Calu3 (cell line): ENCODE measurements at regions of chr1 and their contacts with region 1.

Region 1: DNA sequence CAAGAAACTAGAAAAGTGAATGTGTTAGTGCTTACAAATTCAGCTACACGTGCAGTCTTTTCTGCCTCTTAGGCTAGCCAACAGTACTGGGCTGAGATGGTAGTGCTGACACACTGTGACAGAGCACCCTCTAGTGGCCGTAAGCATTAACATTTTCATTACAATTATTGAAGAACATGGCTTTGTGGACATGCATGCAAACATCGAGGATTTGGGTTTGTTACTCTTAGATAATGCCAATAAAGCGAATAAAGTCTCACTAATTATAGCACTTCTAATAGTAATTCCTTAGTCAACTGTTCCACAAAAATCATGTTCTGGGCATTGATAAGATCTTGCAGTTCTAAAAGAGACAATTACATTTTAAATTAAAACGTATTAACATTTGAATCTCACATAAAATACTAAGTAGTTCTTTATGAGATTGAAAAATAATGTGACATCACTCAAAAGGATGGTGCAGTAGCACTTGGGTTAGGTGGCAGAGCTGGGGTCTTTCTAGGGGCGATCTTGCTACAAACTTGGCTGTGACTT is 47.1 kb downstream of the MYSM1 start:
- DNase-seq: peak; percentile 67
- H3K4me3 Mint-ChIP-seq: no peak overlapping the region
- H3K27ac Mint-ChIP-seq: no peak overlapping the region
- H3K4me1 Mint-ChIP-seq: peaks cover 34% of the 10 kb centered on the region
- H3K27me3 Mint-ChIP-seq: no peaks in the 10 kb centered on the region
- CTCF ChIP-seq: peak; percentile 72

Region 2: DNA sequence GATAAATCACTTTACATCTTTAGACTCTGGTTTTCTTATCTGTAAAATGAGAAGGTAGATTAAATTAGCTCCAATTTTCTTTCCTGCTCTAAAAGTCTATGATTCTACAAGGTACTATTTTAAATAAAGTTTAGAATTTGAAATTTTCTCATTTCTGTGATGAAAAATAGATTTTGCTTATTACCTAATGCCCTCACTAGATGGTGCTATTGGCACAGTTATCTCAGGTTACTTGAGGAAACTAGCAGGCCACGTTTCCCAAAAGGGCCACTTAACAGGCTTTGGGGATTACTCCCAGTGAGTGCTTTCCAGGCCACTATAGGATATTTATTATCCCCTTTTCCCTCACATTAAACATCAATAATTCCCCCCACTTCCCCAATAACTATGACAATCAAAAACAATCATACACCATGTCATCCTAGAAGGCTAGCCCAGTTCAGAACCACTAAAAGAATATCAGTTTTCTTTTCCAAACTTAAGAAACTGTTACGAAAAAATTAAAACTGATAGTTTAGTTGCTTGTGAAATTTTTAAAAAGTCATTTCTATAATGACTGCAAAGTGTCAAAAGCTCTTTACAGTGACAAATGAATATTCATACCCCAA is 136.8 kb before region 1 on chr1:
- CTCF ChIA-PET with region 1: interaction called, 3 read pairs
- intact Hi-C with region 1: loop called (anchors 1 kb)
- DNase-seq: peak; percentile 39
- H3K4me3 Mint-ChIP-seq: no peak overlapping the region
- H3K27ac Mint-ChIP-seq: no peak overlapping the region
- H3K4me1 Mint-ChIP-seq: no peaks in the 10 kb centered on the region
- H3K27me3 Mint-ChIP-seq: no peaks in the 10 kb centered on the region
- CTCF ChIP-seq: peak; percentile 54

Region 3: GRCh38 chr1:58546520-58547308 is 106.0 kb before region 1 on chr1 and contains the start of gene OMA1:
- CTCF ChIA-PET with region 1: interaction called, 19 read pairs
- intact Hi-C with region 1: loop called (anchors 10 kb)
- DNase-seq: peak; percentile 97
- H3K4me3 Mint-ChIP-seq: peak within 1 kb of the TSS; percentile 85
- H3K27ac Mint-ChIP-seq: peak within 1 kb of the TSS; percentile 94
- H3K4me1 Mint-ChIP-seq: peaks cover 28% of the 10 kb centered on the region
- H3K27me3 Mint-ChIP-seq: no peaks in the 10 kb centered on the region
- CTCF ChIP-seq: peak; percentile 95
- total RNA-seq, gene OMA1: 25.4 and 35.2 TPM in 2 replicates

Region 4: GRCh38 chr1:58573705-58574591 is 78.8 kb before region 1 on chr1:
- CTCF ChIA-PET with region 1: interaction called, 7 read pairs
- intact Hi-C with region 1: loop called (anchors 1 kb)
- DNase-seq: peak; percentile 50
- H3K4me3 Mint-ChIP-seq: peak overlapping the region; percentile 100
- H3K27ac Mint-ChIP-seq: peak overlapping the region; percentile 97
- H3K4me1 Mint-ChIP-seq: peaks cover 56% of the 10 kb centered on the region
- H3K27me3 Mint-ChIP-seq: no peaks in the 10 kb centered on the region
- CTCF ChIP-seq: no peak

Region 5: DNA sequence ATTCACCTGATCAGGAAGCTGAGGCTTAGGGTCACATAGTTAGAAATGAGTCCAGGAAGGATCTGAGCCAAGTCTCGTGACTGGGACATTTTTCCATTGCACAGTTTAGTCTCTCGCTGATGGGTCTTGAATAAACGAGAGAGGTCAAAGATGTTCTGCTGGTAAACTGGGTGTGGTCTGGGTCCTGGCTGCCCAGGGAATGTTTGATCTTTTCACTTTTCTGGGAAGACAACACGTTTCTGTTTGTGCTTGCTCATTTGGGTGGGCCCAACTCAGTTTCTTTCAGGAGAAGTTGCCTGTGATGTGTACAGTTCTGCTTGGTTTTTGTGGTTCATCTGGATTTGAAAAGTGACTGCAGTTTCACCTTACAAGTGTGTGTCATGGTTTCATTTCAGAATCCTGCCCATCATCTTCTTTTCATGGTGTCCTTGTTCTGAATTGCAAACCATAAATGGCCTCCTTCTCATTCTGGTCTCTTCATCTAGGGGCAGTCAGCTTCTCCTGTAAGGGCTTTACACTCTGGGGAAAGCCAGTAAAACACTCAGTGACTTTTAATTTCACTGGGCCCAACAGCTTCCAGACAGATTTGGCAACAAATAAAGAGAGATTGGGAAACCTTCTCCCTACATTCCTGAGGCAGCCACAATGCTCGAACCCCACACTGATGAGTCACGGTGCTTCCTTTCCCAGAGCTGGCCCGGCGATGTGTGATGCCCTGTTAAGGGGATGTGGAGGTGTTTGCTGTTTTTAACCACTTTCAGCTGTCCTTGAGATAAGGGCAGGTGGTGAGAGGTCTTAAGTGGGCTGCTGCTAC is 68.4 kb before region 1 on chr1:
- CTCF ChIA-PET with region 1: interaction called, 7 read pairs
- intact Hi-C with region 1: loop called (anchors 2 kb)
- DNase-seq: peak; percentile 76
- H3K4me3 Mint-ChIP-seq: peak overlapping the region; percentile 64
- H3K27ac Mint-ChIP-seq: peak overlapping the region; percentile 97
- H3K4me1 Mint-ChIP-seq: peaks cover 50% of the 10 kb centered on the region
- H3K27me3 Mint-ChIP-seq: no peaks in the 10 kb centered on the region
- CTCF ChIP-seq: no peak